Astrocyte of the cerebellum (primary cell): ENCODE measurements at regions of chr18 and their contacts with region 1.

Region 1: GRCh38 chr18:62118328-62118727 is 68.5 kb downstream of the PIGN start:
- DNase-seq: peak; percentile 87
- H3K4me3 ChIP-seq: no peak overlapping the region
- CTCF ChIP-seq: no peak

Region 2: GRCh38 chr18:61581578-61582201 is 536.6 kb before region 1 on chr18:
- in situ Hi-C with region 1: loop called (anchors 25 kb)
- DNase-seq: no peak
- H3K4me3 ChIP-seq: peak overlapping the region; percentile 34
- CTCF ChIP-seq: peak; percentile 96